CD8-positive, alpha-beta T cell (primary cell): ENCODE measurements at regions of chr9 and their contacts with region 1.

Region 1: GRCh38 chr9:33225319-33226149 is 14.4 kb upstream of the SPINK4 start:
- DNase-seq: peak; percentile 44 to 82 (median 74)
- ATAC-seq: peak; percentile 86
- H3K4me3 ChIP-seq: no peak overlapping the region
- H3K4me3 Mint-ChIP-seq: no peak overlapping the region
- H3K27ac ChIP-seq: no peak overlapping the region
- H3K27ac Mint-ChIP-seq: no peak overlapping the region
- H3K4me1 ChIP-seq: no peaks in the 10 kb centered on the region
- H3K4me1 Mint-ChIP-seq: peaks cover 13% of the 10 kb centered on the region
- H3K27me3 ChIP-seq: no peaks in the 10 kb centered on the region
- H3K27me3 Mint-ChIP-seq: peaks cover 2% of the 10 kb centered on the region
- CTCF ChIP-seq: peak; percentile 78

Region 2: DNA sequence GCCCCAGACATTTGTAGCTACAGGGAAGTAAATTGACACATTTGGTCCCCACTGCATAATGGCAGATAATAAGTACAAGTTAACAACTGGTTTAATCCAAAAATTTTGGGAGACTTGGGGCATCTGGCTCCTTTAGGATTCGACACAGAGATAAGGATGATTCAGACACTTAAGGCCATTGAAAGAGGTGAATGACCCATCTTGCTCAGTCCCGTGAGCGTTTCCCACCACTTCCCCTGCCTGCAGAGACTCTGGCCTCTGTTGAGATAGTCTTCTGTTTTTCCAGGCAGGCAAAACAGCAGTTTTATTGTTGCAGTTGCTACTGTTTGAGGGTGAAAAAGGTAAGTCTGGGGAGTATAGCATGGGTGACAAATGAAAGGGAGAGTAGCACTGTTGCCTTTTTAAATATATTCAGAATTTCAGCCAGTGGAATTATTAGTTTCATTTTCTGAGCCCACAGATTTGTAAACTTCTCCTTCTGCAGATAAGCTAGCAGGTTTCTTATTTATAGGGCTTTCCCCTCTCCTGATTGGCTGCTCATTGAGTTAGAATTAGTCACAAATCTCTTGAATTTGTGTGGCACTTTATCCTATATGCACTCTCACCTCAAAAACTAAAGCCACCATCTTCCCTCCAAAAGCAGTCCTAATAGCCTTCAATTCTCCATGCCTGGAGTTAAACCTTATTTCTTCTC is 821.8 kb before region 1 on chr9:
- CTCF ChIA-PET with region 1: no interaction called
- POLR2A ChIA-PET with region 1: no interaction called
- intact Hi-C with region 1: no loop called
- DNase-seq: no peak
- ATAC-seq: no peak
- H3K4me3 ChIP-seq: no peak overlapping the region
- H3K4me3 Mint-ChIP-seq: no peak overlapping the region
- H3K27ac ChIP-seq: no peak overlapping the region
- H3K27ac Mint-ChIP-seq: no peak overlapping the region
- H3K4me1 ChIP-seq: no peaks in the 10 kb centered on the region
- H3K4me1 Mint-ChIP-seq: no peaks in the 10 kb centered on the region
- H3K27me3 ChIP-seq: no peaks in the 10 kb centered on the region
- H3K27me3 Mint-ChIP-seq: no peaks in the 10 kb centered on the region
- CTCF ChIP-seq: no peak

Region 3: GRCh38 chr9:33130508-33130911 is 95.0 kb before region 1 on chr9:
- CTCF ChIA-PET with region 1: interaction called, 16 read pairs
- POLR2A ChIA-PET with region 1: no interaction called
- intact Hi-C with region 1: loop called (anchors 1 to 5 kb)
- DNase-seq: peak in 2 of 9 experiments; percentile 49 to 68
- ATAC-seq: peak; percentile 74
- H3K4me3 ChIP-seq: no peak overlapping the region
- H3K4me3 Mint-ChIP-seq: no peak overlapping the region
- H3K27ac ChIP-seq: peak overlapping the region in 1 of 2 experiments; percentile 83
- H3K27ac Mint-ChIP-seq: peak overlapping the region; percentile 89
- H3K4me1 ChIP-seq: peaks cover 16% of the 10 kb centered on the region
- H3K4me1 Mint-ChIP-seq: peaks cover 53% of the 10 kb centered on the region
- H3K27me3 ChIP-seq: no peaks in the 10 kb centered on the region
- H3K27me3 Mint-ChIP-seq: no peaks in the 10 kb centered on the region
- CTCF ChIP-seq: no peak

Region 4: GRCh38 chr9:33177639-33178038 is 47.9 kb before region 1 on chr9:
- CTCF ChIA-PET with region 1: interaction called, 4 read pairs
- POLR2A ChIA-PET with region 1: no interaction called
- intact Hi-C with region 1: loop called in 1 of 2 experiments (anchors 2 kb)
- DNase-seq: no peak
- ATAC-seq: no peak
- H3K4me3 ChIP-seq: no peak overlapping the region
- H3K4me3 Mint-ChIP-seq: no peak overlapping the region
- H3K27ac ChIP-seq: no peak overlapping the region
- H3K27ac Mint-ChIP-seq: no peak overlapping the region
- H3K4me1 ChIP-seq: no peaks in the 10 kb centered on the region
- H3K4me1 Mint-ChIP-seq: peaks cover 2% of the 10 kb centered on the region
- H3K27me3 ChIP-seq: no peaks in the 10 kb centered on the region
- H3K27me3 Mint-ChIP-seq: peaks cover 3% of the 10 kb centered on the region
- CTCF ChIP-seq: no peak

Region 5: GRCh38 chr9:33197279-33198152 is 28.0 kb before region 1 on chr9:
- CTCF ChIA-PET with region 1: interaction called, 12 read pairs
- POLR2A ChIA-PET with region 1: no interaction called
- intact Hi-C with region 1: no loop called
- DNase-seq: no peak
- ATAC-seq: no peak
- H3K4me3 ChIP-seq: no peak overlapping the region
- H3K4me3 Mint-ChIP-seq: no peak overlapping the region
- H3K27ac ChIP-seq: no peak overlapping the region
- H3K27ac Mint-ChIP-seq: no peak overlapping the region
- H3K4me1 ChIP-seq: no peaks in the 10 kb centered on the region
- H3K4me1 Mint-ChIP-seq: peaks cover 7% of the 10 kb centered on the region
- H3K27me3 ChIP-seq: no peaks in the 10 kb centered on the region
- H3K27me3 Mint-ChIP-seq: no peaks in the 10 kb centered on the region
- CTCF ChIP-seq: no peak